ENCODE measurements at regions of chr1 and their contacts with region 1.

Region 1: GRCh38 chr1:77126307-77126706 is 92.9 kb downstream of the PIGK start:
- DNase-seq: peak in 4 of 5 donors; percentile 5 to 28 (median 18)
- H3K4me3 ChIP-seq: no peak overlapping the region
- H3K4me3 Mint-ChIP-seq: no peak overlapping the region
- H3K27ac ChIP-seq: no peak overlapping the region
- H3K27ac Mint-ChIP-seq: peak overlapping the region in 1 of 7 donors; percentile 46
- H3K4me1 ChIP-seq: no peaks in the 10 kb centered on the region
- H3K4me1 Mint-ChIP-seq: peaks cover 0 to 1% (median 0%) of the 10 kb centered on the region in 4 donors
- H3K27me3 ChIP-seq: no peaks in the 10 kb centered on the region
- H3K27me3 Mint-ChIP-seq: no peaks in the 10 kb centered on the region

Region 2: DNA sequence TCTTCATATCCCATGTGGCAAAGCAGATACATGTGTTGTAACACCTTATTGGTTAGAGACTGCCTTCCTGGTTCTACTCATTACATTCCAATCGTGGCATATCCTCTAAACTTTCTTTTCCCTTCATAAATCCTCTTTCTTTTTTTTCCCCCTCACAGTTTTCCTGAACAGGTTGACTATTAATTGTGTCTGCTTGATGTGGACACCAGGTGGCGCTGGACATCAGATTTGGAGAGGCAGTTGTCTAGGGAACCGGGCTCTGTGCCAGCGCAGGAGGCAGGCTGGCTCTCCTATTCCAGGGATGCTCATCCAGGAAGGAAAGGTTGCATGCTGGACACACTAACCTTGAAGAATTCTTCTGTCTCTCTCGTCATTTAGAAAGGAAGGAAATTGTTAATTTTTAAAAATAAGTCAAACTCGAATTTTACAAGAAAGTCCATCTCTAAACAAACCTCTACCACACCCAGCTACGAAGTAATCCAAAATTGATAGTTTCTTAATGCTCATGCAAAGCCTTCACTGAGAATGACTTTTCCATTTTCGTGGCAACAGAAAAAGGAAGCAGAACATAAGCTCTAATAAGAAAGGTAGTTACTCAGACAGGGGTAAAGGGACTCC is 1134.7 kb before region 1 on chr1:
- CTCF ChIA-PET with region 1: no interaction called
- POLR2A ChIA-PET with region 1: no interaction called
- intact Hi-C with region 1: loop called (anchors 5 kb)
- DNase-seq: peak; percentile 37 to 45 (median 40)
- H3K4me3 ChIP-seq: no peak overlapping the region
- H3K4me3 Mint-ChIP-seq: no peak overlapping the region
- H3K27ac ChIP-seq: no peak overlapping the region
- H3K27ac Mint-ChIP-seq: no peak overlapping the region
- H3K4me1 ChIP-seq: no peaks in the 10 kb centered on the region
- H3K4me1 Mint-ChIP-seq: no peaks in the 10 kb centered on the region
- H3K27me3 ChIP-seq: no peaks in the 10 kb centered on the region
- H3K27me3 Mint-ChIP-seq: peaks cover 2 to 3% of the 10 kb centered on the region in 2 donors

Region 3: GRCh38 chr1:76330991-76331603 is 795.2 kb before region 1 on chr1:
- CTCF ChIA-PET with region 1: no interaction called
- POLR2A ChIA-PET with region 1: no interaction called
- intact Hi-C with region 1: loop called (anchors 5 kb)
- DNase-seq: peak; percentile 35 to 42 (median 36)
- H3K4me3 ChIP-seq: no peak overlapping the region
- H3K4me3 Mint-ChIP-seq: no peak overlapping the region
- H3K27ac ChIP-seq: no peak overlapping the region
- H3K27ac Mint-ChIP-seq: no peak overlapping the region
- H3K4me1 ChIP-seq: no peaks in the 10 kb centered on the region
- H3K4me1 Mint-ChIP-seq: peaks cover 0 to 6% (median 5%) of the 10 kb centered on the region in 4 donors
- H3K27me3 ChIP-seq: no peaks in the 10 kb centered on the region
- H3K27me3 Mint-ChIP-seq: no peaks in the 10 kb centered on the region

Region 4: GRCh38 chr1:76901158-76901767 is 225.0 kb before region 1 on chr1:
- CTCF ChIA-PET with region 1: no interaction called
- POLR2A ChIA-PET with region 1: no interaction called
- intact Hi-C with region 1: loop called (anchors 1 kb)
- DNase-seq: peak in 4 of 5 donors; percentile 10 to 19 (median 16)
- H3K4me3 ChIP-seq: no peak overlapping the region
- H3K4me3 Mint-ChIP-seq: no peak overlapping the region
- H3K27ac ChIP-seq: no peak overlapping the region
- H3K27ac Mint-ChIP-seq: no peak overlapping the region
- H3K4me1 ChIP-seq: no peaks in the 10 kb centered on the region
- H3K4me1 Mint-ChIP-seq: no peaks in the 10 kb centered on the region
- H3K27me3 ChIP-seq: no peaks in the 10 kb centered on the region
- H3K27me3 Mint-ChIP-seq: peaks cover 0 to 2% of the 10 kb centered on the region in 2 donors

Measured in CD4-positive, alpha-beta memory T cell (primary cell).